Naive thymus-derived CD4-positive, alpha-beta T cell (primary cell): ENCODE measurements at regions of chrX and their contacts with region 1.

Region 1: GRCh38 chrX:79081895-79082512 is 62.5 kb upstream of the GPR174 start:
- DNase-seq: peak in 7 of 9 donors; percentile 35 to 78 (median 67)
- ATAC-seq: peak; percentile 92
- H3K4me3 ChIP-seq: peak overlapping the region; percentile 25
- H3K4me3 Mint-ChIP-seq: peak overlapping the region; percentile 54 to 87 (median 72)
- H3K27ac ChIP-seq: peak overlapping the region; percentile 54
- H3K27ac Mint-ChIP-seq: peak overlapping the region; percentile 79 to 97 (median 87)
- H3K4me1 ChIP-seq: peaks cover 5 to 9% of the 10 kb centered on the region in 2 donors
- H3K4me1 Mint-ChIP-seq: peaks cover 4 to 52% (median 25%) of the 10 kb centered on the region in 7 donors
- H3K27me3 ChIP-seq: no peaks in the 10 kb centered on the region
- H3K27me3 Mint-ChIP-seq: no peaks in the 10 kb centered on the region

Region 2: GRCh38 chrX:78139160-78140123 is 942.6 kb before region 1 on chrX and contains the start of gene TAF9B:
- CTCF ChIA-PET with region 1: no interaction called
- POLR2A ChIA-PET with region 1: no interaction called
- intact Hi-C with region 1: loop called in 1 of 2 experiments (anchors 5 kb)
- DNase-seq: peak; percentile 57 to 84 (median 80)
- ATAC-seq: peak; percentile 99
- H3K4me3 ChIP-seq: peak within 1 kb of the TSS; percentile 77
- H3K4me3 Mint-ChIP-seq: peak within 1 kb of the TSS; percentile 88 to 95 (median 92)
- H3K27ac ChIP-seq: peak within 1 kb of the TSS; percentile 82
- H3K27ac Mint-ChIP-seq: peak within 1 kb of the TSS; percentile 81 to 95 (median 93)
- H3K4me1 ChIP-seq: no peaks in the 10 kb centered on the region
- H3K4me1 Mint-ChIP-seq: peaks cover 0 to 11% (median 5%) of the 10 kb centered on the region in 7 donors
- H3K27me3 ChIP-seq: no peaks in the 10 kb centered on the region
- H3K27me3 Mint-ChIP-seq: no peaks in the 10 kb centered on the region
- total RNA-seq, gene TAF9B: 10.4 to 19.9 (median 18.9) TPM

Region 3: DNA sequence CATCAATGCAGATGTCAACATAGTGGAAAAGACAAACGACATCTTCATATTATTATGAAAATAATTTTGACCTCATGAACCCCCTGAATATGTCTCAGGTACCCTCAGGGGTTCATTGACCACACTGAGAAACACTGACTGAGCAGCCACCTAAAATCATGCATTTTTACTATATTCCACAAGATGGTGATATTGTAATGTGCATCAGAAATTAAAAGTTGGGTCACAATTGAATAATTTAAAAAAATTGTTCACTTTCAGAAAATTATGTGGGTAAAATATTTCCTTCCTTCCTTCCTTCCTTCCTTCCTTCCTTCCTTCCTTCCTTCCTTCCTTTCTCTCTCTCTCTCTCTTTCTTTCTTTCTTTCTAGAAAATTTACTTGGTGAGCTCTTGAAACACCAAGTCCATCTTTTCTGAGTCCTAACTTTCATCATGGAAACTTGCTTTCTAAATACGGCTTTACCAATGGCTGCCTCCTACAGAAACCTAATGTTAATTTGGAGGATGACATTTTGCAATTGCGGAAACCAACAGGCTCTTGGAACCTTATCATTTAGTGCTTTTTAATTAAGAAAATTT is 526.5 kb before region 1 on chrX:
- CTCF ChIA-PET with region 1: interaction called, 6 read pairs
- POLR2A ChIA-PET with region 1: no interaction called
- intact Hi-C with region 1: loop called (anchors 1 kb)
- DNase-seq: peak in 5 of 9 donors; percentile 25 to 44 (median 29)
- ATAC-seq: peak; percentile 59
- H3K4me3 ChIP-seq: no peak overlapping the region
- H3K4me3 Mint-ChIP-seq: peak overlapping the region in 1 of 10 donors; percentile 30
- H3K27ac ChIP-seq: no peak overlapping the region
- H3K27ac Mint-ChIP-seq: peak overlapping the region in 6 of 9 donors; percentile 66 to 83 (median 73)
- H3K4me1 ChIP-seq: peaks cover 0 to 2% of the 10 kb centered on the region in 2 donors
- H3K4me1 Mint-ChIP-seq: peaks cover 0 to 7% (median 3%) of the 10 kb centered on the region in 7 donors
- H3K27me3 ChIP-seq: no peaks in the 10 kb centered on the region
- H3K27me3 Mint-ChIP-seq: no peaks in the 10 kb centered on the region

Region 4: GRCh38 chrX:78945186-78945912 is 136.7 kb before region 1 on chrX and contains the start of gene P2RY10:
- CTCF ChIA-PET with region 1: interaction called, 3 read pairs
- POLR2A ChIA-PET with region 1: interaction called, 18 read pairs
- intact Hi-C with region 1: loop called (anchors 1 to 5 kb)
- DNase-seq: peak in 8 of 9 donors; percentile 21 to 82 (median 75)
- ATAC-seq: peak; percentile 92
- H3K4me3 ChIP-seq: peak within 1 kb of the TSS; percentile 81
- H3K4me3 Mint-ChIP-seq: peak within 1 kb of the TSS; percentile 86 to 99 (median 92)
- H3K27ac ChIP-seq: peak within 1 kb of the TSS; percentile 86
- H3K27ac Mint-ChIP-seq: peak within 1 kb of the TSS; percentile 94 to 99 (median 98)
- H3K4me1 ChIP-seq: peaks cover 6 to 19% of the 10 kb centered on the region in 2 donors
- H3K4me1 Mint-ChIP-seq: peaks cover 15 to 62% (median 51%) of the 10 kb centered on the region in 7 donors
- H3K27me3 ChIP-seq: no peaks in the 10 kb centered on the region
- H3K27me3 Mint-ChIP-seq: no peaks in the 10 kb centered on the region
- total RNA-seq, gene P2RY10: 47.6 to 98.5 (median 67.4) TPM

Region 5: DNA sequence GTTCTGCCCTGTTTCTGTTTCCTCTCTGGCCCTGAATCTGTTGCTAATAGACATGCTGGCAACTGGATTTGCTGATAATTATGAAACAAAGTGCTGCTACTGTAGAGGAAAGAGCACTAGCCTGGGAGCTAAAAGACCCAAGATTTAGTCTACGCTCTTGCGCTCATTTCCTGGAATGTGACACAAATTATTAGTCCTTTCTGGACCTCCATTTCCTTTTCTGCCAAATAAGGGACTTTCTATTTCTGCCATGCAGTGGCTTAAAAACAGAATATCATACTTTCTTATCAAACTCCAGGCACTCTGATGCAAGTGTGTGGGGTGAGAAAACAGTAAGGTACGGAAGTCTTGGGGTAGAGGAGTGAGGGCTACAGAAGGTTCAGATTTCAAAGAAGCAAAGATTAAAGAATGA is 14.1 kb after region 1 on chrX:
- CTCF ChIA-PET with region 1: interaction called, 5 read pairs
- POLR2A ChIA-PET with region 1: no interaction called
- intact Hi-C with region 1: loop called in 1 of 2 experiments (anchors 1 kb)
- DNase-seq: peak in 5 of 9 donors; percentile 3 to 32 (median 21)
- ATAC-seq: peak; percentile 83
- H3K4me3 ChIP-seq: peak overlapping the region; percentile 4
- H3K4me3 Mint-ChIP-seq: peak overlapping the region; percentile 20 to 81 (median 52)
- H3K27ac ChIP-seq: peak overlapping the region; percentile 71
- H3K27ac Mint-ChIP-seq: peak overlapping the region; percentile 68 to 99 (median 91)
- H3K4me1 ChIP-seq: peaks cover 21 to 22% of the 10 kb centered on the region in 2 donors
- H3K4me1 Mint-ChIP-seq: peaks cover 13 to 76% (median 56%) of the 10 kb centered on the region in 7 donors
- H3K27me3 ChIP-seq: no peaks in the 10 kb centered on the region
- H3K27me3 Mint-ChIP-seq: no peaks in the 10 kb centered on the region

Region 6: GRCh38 chrX:79161655-79162054 is 79.7 kb after region 1 on chrX:
- CTCF ChIA-PET with region 1: no interaction called
- POLR2A ChIA-PET with region 1: no interaction called
- intact Hi-C with region 1: loop called in 1 of 2 experiments (anchors 5 kb)
- DNase-seq: peak in 8 of 9 donors; percentile 22 to 85 (median 77)
- ATAC-seq: peak; percentile 95
- H3K4me3 ChIP-seq: peak overlapping the region; percentile 52
- H3K4me3 Mint-ChIP-seq: peak overlapping the region; percentile 80 to 96 (median 90)
- H3K27ac ChIP-seq: peak overlapping the region; percentile 76
- H3K27ac Mint-ChIP-seq: peak overlapping the region; percentile 95 to 99 (median 97)
- H3K4me1 ChIP-seq: peaks cover 48 to 50% of the 10 kb centered on the region in 2 donors
- H3K4me1 Mint-ChIP-seq: peaks cover 16 to 79% (median 68%) of the 10 kb centered on the region in 7 donors
- H3K27me3 ChIP-seq: no peaks in the 10 kb centered on the region
- H3K27me3 Mint-ChIP-seq: no peaks in the 10 kb centered on the region

Region 7: DNA sequence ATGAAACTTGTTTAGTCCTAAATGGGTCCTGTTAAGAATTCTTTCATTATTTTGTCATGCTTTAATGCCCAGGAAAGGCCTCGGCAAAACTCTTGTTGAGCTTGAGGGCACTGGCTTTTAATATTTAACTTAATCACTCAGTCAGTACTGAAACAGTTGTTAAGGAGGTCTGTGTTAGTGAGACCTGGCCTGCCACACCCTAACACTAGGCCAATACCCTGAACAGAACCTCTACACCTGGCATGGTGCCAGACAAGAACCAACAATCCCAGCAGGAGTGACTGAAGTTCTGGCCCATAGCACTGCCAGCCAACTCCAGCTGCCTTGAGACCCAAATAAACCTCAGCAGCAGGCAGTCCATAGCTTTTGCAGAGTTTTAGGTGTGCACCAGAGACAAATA is 370.9 kb after region 1 on chrX:
- CTCF ChIA-PET with region 1: no interaction called
- POLR2A ChIA-PET with region 1: no interaction called
- intact Hi-C with region 1: loop called in 1 of 2 experiments (anchors 1 kb)
- DNase-seq: no peak
- ATAC-seq: no peak
- H3K4me3 ChIP-seq: no peak overlapping the region
- H3K4me3 Mint-ChIP-seq: no peak overlapping the region
- H3K27ac ChIP-seq: no peak overlapping the region
- H3K27ac Mint-ChIP-seq: no peak overlapping the region
- H3K4me1 ChIP-seq: no peaks in the 10 kb centered on the region
- H3K4me1 Mint-ChIP-seq: peaks cover 0 to 10% (median 2%) of the 10 kb centered on the region in 7 donors
- H3K27me3 ChIP-seq: no peaks in the 10 kb centered on the region
- H3K27me3 Mint-ChIP-seq: no peaks in the 10 kb centered on the region

Region 8: GRCh38 chrX:80004458-80004857 is 922.5 kb after region 1 on chrX:
- CTCF ChIA-PET with region 1: no interaction called
- POLR2A ChIA-PET with region 1: no interaction called
- intact Hi-C with region 1: no loop called
- DNase-seq: no peak
- ATAC-seq: no peak
- H3K4me3 ChIP-seq: no peak overlapping the region
- H3K4me3 Mint-ChIP-seq: no peak overlapping the region
- H3K27ac ChIP-seq: no peak overlapping the region
- H3K27ac Mint-ChIP-seq: no peak overlapping the region
- H3K4me1 ChIP-seq: no peaks in the 10 kb centered on the region
- H3K4me1 Mint-ChIP-seq: no peaks in the 10 kb centered on the region
- H3K27me3 ChIP-seq: no peaks in the 10 kb centered on the region
- H3K27me3 Mint-ChIP-seq: no peaks in the 10 kb centered on the region